ENCODE measurements at regions of chr12 and their contacts with region 1.

Region 1: GRCh38 chr12:90940872-90941499 is 14.0 kb downstream of the CCER1 start:
- H3K4me3 ChIP-seq: no peak overlapping the region
- H3K27ac ChIP-seq: no peak overlapping the region
- H3K4me1 ChIP-seq: no peaks in the 10 kb centered on the region
- CTCF ChIP-seq: no peak

Region 2: GRCh38 chr12:90959538-90960139 is 18.7 kb after region 1 on chr12:
- CTCF ChIA-PET with region 1: interaction called, 34 read pairs
- POLR2A ChIA-PET with region 1: no interaction called
- H3K4me3 ChIP-seq: no peak overlapping the region
- H3K27ac ChIP-seq: no peak overlapping the region
- H3K4me1 ChIP-seq: no peaks in the 10 kb centered on the region
- CTCF ChIP-seq: no peak

Region 3: DNA sequence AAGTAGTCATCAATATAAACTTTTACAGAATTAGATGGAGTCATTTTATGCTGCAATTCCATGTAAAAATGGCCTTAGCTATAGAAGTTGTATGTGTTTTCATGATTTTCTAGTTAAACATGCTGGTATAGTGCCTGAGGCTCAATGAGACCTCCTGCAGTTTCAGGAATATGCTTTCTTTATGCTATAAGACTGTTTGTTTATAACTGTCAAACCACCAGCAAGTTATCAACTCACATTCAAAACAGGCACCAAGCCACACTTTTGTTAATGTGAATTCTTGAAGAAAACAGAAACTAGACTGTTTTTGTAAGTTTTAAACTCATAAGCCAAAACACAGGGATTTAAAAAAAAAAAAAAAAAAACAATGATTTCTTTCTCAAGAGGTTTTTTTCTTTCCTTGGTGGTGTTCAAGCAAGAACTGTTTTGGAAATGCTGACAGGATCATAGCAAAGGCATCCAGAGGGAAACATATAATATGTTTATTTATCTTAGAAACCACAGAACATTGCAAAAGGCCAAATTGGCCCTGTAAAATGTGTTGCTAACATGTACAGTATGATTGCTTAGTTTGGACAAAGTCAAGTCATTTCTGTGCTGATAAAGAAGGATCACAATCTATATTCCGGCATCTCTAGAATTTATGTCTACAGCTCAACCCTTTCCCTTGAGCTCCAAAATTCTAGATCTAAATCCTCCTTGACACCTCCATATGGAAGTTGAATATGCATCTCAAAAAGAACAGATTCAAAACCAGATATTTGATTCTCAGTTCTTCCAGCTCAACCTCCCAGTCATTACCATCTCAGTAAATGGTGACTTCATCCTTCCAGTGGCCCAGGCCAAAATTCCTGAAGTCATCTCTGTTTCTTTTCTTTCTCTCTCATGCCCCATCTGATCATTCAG is 199.3 kb after region 1 on chr12:
- CTCF ChIA-PET with region 1: no interaction called
- POLR2A ChIA-PET with region 1: no interaction called
- H3K4me3 ChIP-seq: no peak overlapping the region
- H3K27ac ChIP-seq: no peak overlapping the region; the same call in 1 of the 2 replicates
- H3K4me1 ChIP-seq: peaks cover 12% of the 10 kb centered on the region; the same call in 1 of the 2 replicates
- CTCF ChIP-seq: no peak

Region 4: GRCh38 chr12:91355150-91356006 is 414.4 kb after region 1 on chr12:
- CTCF ChIA-PET with region 1: interaction called, 18 read pairs
- POLR2A ChIA-PET with region 1: no interaction called
- H3K4me3 ChIP-seq: no peak overlapping the region
- H3K27ac ChIP-seq: no peak overlapping the region
- H3K4me1 ChIP-seq: no peaks in the 10 kb centered on the region
- CTCF ChIP-seq: peak; percentile 34; the same call in 1 of the 2 replicates